Heart left ventricle (tissue), 16 donors: ENCODE measurements at regions of chr1 and their contacts with region 1.

Region 1: GRCh38 chr1:111801071-111801841 is 45.6 kb downstream of the DDX20 start:
- DNase-seq: peak in 4 of 5 donors; percentile 57 to 85 (median 70)
- ATAC-seq: peak; percentile 88 to 93 (median 90)
- H3K4me3 ChIP-seq: no peak overlapping the region
- H3K27ac ChIP-seq: peak overlapping the region in 10 of 12 donors; percentile 20 to 86 (median 64)
- H3K4me1 ChIP-seq: peaks cover 0 to 31% (median 8%) of the 10 kb centered on the region in 12 donors
- H3K27me3 ChIP-seq: no peaks in the 10 kb centered on the region
- CTCF ChIP-seq: peak in 4 of 12 donors; percentile 8 to 32 (median 12)
- POLR2A ChIP-seq: no peak

Region 2: GRCh38 chr1:111880881-111881837 is 79.9 kb after region 1 on chr1:
- intact Hi-C with region 1: loop called in 1 of 10 experiments (anchors 10 kb)
- DNase-seq: peak in 3 of 5 donors; percentile 36 to 72 (median 44)
- ATAC-seq: peak; percentile 27 to 73 (median 52)
- H3K4me3 ChIP-seq: no peak overlapping the region
- H3K27ac ChIP-seq: peak overlapping the region in 4 of 12 donors; percentile 12 to 53 (median 36)
- H3K4me1 ChIP-seq: peaks cover 0 to 60% (median 28%) of the 10 kb centered on the region in 12 donors
- H3K27me3 ChIP-seq: no peaks in the 10 kb centered on the region
- CTCF ChIP-seq: no peak
- POLR2A ChIP-seq: no peak

Region 3: GRCh38 chr1:111920221-111921024 is 119.2 kb after region 1 on chr1:
- intact Hi-C with region 1: loop called in 1 of 10 experiments (anchors 5 kb)
- DNase-seq: peak in 4 of 5 donors; percentile 47 to 71 (median 60)
- ATAC-seq: peak; percentile 84 to 94 (median 90)
- H3K4me3 ChIP-seq: no peak overlapping the region
- H3K27ac ChIP-seq: peak overlapping the region; percentile 58 to 97 (median 81)
- H3K4me1 ChIP-seq: peaks cover 0 to 45% (median 15%) of the 10 kb centered on the region in 12 donors
- H3K27me3 ChIP-seq: no peaks in the 10 kb centered on the region
- CTCF ChIP-seq: no peak
- POLR2A ChIP-seq: peak in 1 of 2 donors; percentile 23